ENCODE measurements at regions of chr12 and their contacts with region 1.

Region 1: DNA sequence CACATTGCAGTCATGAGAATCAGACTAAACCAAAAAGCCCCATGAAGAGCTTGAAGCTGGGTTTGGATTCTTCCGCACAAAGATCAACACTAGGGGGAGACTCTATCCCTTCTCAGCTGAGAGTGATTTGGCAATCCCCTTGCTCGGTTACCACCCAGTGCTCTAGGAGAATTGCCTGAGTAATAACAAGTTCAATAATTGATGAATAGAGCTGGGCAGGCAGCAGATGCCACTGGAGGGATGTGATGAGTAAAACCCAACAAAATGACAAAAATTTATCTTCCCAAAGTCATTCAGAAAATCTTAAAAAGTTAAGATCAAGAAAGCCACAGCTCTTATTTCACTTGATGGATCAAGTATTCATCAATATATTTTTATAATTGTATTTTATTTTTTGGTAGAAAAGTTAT is 185.6 kb upstream of the ARID2 start:
- DNase-seq: no peak
- ATAC-seq: peak; percentile 87

Region 2: DNA sequence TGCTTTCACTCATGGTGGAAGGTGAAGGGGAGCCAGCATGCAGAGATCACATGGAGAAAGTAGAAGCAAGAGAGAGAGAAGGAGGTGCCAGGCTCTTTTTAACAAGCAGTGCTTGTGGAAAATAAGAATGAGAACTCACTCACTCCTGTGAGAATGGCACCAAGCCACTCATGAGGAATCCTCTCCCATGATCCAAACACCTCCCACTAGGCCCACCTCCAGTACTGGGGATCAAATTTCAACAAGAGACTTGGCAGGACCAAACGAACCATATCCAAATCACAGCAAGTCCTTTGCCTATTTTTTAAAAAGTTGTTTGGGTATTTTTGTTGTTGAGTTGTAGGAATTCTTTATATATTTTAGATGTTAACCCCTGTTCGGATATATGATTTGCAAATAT is 60.3 kb before region 1 on chr12:
- intact Hi-C with region 1: no loop called
- DNase-seq: peak; percentile 43
- ATAC-seq: peak; percentile 71

Region 3: DNA sequence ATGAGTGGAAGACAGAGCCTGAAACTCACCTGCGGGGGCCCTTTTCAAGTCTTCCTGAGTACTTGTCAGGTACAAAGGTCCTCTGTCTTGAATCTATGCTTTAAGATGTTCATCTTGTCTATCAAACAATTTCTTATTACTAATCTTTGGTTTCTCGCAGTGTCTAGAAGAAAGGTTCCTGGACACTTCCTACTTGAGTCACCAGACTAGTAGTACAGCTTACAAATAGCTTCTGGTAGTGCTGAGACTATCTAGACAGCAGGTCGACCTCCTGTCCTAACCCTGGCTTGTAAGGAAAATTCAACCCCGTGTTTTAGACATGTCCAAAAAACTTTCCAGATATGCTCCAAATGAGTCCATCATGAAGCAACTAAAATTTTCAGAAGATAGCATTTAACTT is 174.4 kb after region 1 on chr12:
- intact Hi-C with region 1: no loop called
- DNase-seq: no peak
- ATAC-seq: no peak

Region 4: GRCh38 chr12:45729233-45730083 is 185.5 kb after region 1 on chr12 and contains the start of gene ARID2:
- intact Hi-C with region 1: loop called (anchors 10 kb)
- DNase-seq: peak; percentile 75
- ATAC-seq: peak; percentile 34
- total RNA-seq, gene ARID2: 14.3 TPM